ENCODE measurements at regions of chr14 and their contacts with region 1.

Region 1: GRCh38 chr14:55438066-55438683 is 2.2 kb downstream of the TBPL2 start:
- DNase-seq: no peak
- H3K4me3 ChIP-seq: no peak overlapping the region
- CTCF ChIP-seq: peak; percentile 41

Region 2: GRCh38 chr14:55665067-55665675 is 227.0 kb after region 1 on chr14:
- CTCF ChIA-PET with region 1: interaction called, 12 read pairs
- POLR2A ChIA-PET with region 1: no interaction called
- DNase-seq: no peak
- H3K4me3 ChIP-seq: no peak overlapping the region
- CTCF ChIP-seq: no peak

Measured in AG04449 (cell line).